ENCODE measurements at regions of chr9 and their contacts with region 1.

Region 1: GRCh38 chr9:129139993-129140396 is 28.8 kb downstream of the PTPA start:
- DNase-seq: peak; percentile 92 to 98 (median 96)
- ATAC-seq: peak; percentile 76 to 81 (median 78)
- H3K4me3 ChIP-seq: peak overlapping the region in 11 of 12 donors; percentile 29 to 69 (median 57)
- H3K27ac ChIP-seq: peak overlapping the region; percentile 99 to 100 (median 100)
- H3K4me1 ChIP-seq: peaks cover 25 to 77% (median 71%) of the 10 kb centered on the region in 12 donors
- H3K27me3 ChIP-seq: no peaks in the 10 kb centered on the region
- CTCF ChIP-seq: no peak
- POLR2A ChIP-seq: peak in 1 of 2 donors; percentile 50

Region 2: DNA sequence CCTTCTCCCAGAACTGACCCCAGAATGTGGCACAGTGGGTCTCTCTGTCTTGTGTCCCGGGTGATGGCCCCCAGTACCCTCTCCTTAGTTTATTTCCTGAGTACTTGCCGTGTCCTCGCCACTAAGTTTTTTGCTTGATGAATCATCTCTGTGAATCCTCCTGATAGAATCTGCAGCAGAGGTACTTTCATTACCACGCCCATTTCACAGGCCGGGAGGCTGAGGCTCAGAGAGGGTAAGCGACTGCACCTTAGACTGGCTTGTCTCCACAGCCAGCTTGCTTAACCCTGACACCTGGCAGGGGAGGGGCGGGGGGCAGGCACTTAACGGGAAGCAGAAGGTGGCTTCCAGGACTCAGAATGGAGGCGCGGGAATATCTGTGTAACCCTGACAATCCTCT is 46.0 kb after region 1 on chr9:
- intact Hi-C with region 1: no loop called
- DNase-seq: no peak
- ATAC-seq: no peak
- H3K4me3 ChIP-seq: no peak overlapping the region
- H3K27ac ChIP-seq: no peak overlapping the region
- H3K4me1 ChIP-seq: peaks cover 0 to 6% (median 0%) of the 10 kb centered on the region in 12 donors
- H3K27me3 ChIP-seq: no peaks in the 10 kb centered on the region
- CTCF ChIP-seq: no peak
- POLR2A ChIP-seq: no peak

Region 3: DNA sequence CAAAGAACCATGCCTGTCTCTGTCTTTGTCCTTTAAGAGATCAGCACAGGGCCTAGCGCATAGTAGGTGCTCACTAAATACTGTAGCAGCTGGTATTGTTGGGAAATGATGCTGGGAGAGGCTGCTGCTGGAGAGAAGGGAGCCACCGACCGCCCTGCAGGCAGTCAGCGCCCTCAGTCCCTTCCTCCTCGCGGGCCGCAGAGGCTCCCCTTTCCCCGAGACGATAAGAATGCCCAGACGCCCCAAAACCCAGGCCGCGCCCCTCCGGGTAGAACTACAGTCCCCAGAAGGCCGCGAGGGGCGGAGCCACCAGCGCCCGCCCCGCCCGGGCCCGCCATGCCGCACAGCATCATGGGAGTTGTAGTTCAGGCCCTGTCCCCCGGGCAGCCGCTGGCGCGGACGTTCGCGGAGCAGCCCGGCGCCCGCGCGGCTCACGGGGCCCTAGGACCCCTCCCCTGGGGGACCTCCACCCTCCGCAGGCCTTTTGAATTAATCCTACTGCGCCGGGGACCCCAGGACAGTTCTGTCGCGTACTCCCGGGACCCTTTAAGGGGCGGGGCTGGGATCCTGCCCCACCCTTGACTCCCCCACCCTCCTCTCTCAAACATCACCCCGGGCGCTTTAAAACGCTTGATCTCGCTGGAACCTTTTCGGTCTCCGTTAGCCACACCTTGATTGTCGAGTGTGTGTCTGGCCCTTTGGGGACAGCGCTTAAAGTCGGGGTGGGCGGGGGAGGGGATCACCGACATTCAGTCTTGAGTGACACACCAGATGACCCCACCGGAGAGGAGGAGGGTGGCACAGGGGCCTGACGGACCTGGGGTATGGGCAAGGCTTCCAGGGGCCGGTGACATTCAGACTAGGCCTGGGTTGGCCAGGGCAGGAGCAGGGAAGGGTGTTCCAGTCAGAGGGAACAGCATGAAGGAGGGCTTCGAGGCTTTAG is 62.9 kb after region 1 on chr9:
- intact Hi-C with region 1: loop called in 1 of 10 experiments (anchors 2 kb)
- DNase-seq: peak; percentile 89 to 95 (median 91)
- ATAC-seq: peak; percentile 75 to 95 (median 90)
- H3K4me3 ChIP-seq: peak overlapping the region; percentile 54 to 95 (median 78)
- H3K27ac ChIP-seq: peak overlapping the region; percentile 89 to 100 (median 97)
- H3K4me1 ChIP-seq: peaks cover 0 to 22% (median 8%) of the 10 kb centered on the region in 12 donors
- H3K27me3 ChIP-seq: no peaks in the 10 kb centered on the region
- CTCF ChIP-seq: no peak
- POLR2A ChIP-seq: peak in 1 of 2 donors; percentile 58

Region 4: DNA sequence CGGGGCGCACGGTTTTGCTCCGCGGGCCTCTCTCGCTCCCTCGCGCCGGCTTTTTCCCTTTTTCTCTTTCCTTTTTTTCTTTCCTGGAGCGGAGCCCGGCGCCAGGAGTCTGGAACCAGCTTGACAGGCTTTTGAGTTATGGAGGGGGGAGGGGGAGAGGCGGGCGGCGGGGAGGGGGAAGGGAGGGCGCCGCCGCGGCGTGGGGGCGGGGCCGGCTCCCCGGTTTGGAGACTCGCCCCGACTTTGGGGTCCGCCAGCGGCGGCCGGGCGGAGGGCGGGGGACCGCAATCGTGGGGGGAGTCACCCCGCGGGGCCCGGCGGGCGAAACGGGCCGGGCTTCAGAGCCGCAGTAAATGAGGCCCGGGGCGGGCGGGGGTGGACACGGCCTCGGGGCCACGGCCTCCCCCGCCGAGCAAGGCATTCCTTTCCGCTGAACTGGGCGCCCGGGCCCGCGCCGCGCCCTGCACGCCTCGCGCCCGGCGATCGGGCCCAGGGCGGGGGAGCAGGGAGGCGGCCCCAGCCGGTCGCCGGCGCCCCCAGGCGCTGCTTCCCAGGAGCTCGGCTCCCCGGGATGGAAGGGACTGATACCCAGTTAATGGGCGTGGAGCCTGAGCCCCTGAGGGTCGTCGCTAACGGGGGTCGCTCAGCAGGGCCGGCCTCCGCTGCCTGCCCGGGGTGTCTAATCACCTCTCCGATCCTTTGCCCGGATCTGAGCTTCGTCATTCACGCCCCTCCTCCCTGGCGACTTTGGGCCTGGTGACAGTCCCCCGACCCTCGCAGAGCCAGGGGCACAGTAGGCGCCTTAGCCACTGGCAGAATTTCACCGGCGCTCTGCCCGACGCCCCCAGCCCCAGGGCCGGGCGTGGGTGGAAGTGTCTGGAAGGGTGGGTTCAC is 342.8 kb after region 1 on chr9:
- intact Hi-C with region 1: loop called in 5 of 10 experiments (anchors 2 to 5 kb)
- DNase-seq: peak; percentile 88 to 93 (median 88)
- ATAC-seq: peak in 3 of 4 donors; percentile 43 to 74 (median 74)
- H3K4me3 ChIP-seq: peak overlapping the region; percentile 41 to 77 (median 66)
- H3K27ac ChIP-seq: peak overlapping the region; percentile 97 to 100 (median 99)
- H3K4me1 ChIP-seq: peaks cover 11 to 84% (median 64%) of the 10 kb centered on the region in 12 donors
- H3K27me3 ChIP-seq: no peaks in the 10 kb centered on the region
- CTCF ChIP-seq: peak in 4 of 12 donors; percentile 11 to 33 (median 20)
- POLR2A ChIP-seq: peak in 1 of 2 donors; percentile 32

Region 5: DNA sequence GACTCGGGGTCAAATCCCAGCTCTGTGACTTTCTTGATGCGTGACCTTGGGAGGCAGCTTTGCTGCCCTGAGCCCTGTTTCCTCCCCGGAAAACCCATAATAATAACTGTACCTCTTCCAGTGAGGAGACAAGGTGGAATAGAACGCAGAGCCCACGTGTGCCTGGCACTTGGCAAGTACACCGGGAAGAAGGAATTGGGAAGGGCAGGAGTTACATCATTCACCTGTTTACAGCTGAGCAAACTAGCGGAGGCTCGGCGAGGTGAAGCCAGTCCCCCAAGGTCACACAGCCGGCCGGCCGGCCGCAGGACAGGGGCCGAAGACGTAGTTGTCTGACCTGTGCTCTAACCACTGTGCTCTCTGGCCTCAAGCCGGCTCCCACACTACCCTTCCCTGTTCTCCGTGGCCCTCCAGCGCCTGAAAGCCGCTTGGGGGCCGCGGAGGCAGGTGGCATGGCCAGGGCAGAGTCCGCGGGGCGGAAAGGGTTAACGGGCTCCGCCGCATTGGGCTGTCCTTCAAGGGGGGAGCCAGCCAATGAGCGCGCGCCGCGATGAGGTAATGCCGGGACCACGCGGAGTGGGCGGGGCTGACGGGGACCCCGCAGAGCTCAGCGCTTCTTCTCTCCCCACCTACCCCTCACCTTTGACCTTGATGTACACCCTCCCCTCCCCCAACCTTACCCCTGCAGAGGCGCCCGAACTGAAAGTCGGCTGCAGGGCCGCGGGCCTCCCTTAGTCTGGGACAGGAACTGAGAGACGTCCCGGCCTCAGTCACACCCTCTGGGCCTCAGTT is 355.7 kb after region 1 on chr9:
- intact Hi-C with region 1: loop called in 3 of 10 experiments (anchors 2 to 5 kb)
- DNase-seq: peak; percentile 96 to 98 (median 97)
- ATAC-seq: peak; percentile 84 to 89 (median 86)
- H3K4me3 ChIP-seq: peak overlapping the region; percentile 30 to 72 (median 62)
- H3K27ac ChIP-seq: peak overlapping the region; percentile 93 to 100 (median 98)
- H3K4me1 ChIP-seq: peaks cover 8 to 92% (median 65%) of the 10 kb centered on the region in 12 donors
- H3K27me3 ChIP-seq: no peaks in the 10 kb centered on the region
- CTCF ChIP-seq: no peak
- POLR2A ChIP-seq: peak in 1 of 2 donors; percentile 14

Region 6: GRCh38 chr9:129776938-129777768 is 637.2 kb after region 1 on chr9:
- intact Hi-C with region 1: loop called in 4 of 10 experiments (anchors 5 kb)
- DNase-seq: peak; percentile 91 to 97 (median 95)
- ATAC-seq: peak; percentile 87 to 99 (median 97)
- H3K4me3 ChIP-seq: peak overlapping the region in 7 of 12 donors; percentile 0 to 32 (median 15)
- H3K27ac ChIP-seq: peak overlapping the region in 11 of 12 donors; percentile 12 to 78 (median 62)
- H3K4me1 ChIP-seq: peaks cover 0 to 34% (median 14%) of the 10 kb centered on the region in 12 donors
- H3K27me3 ChIP-seq: no peaks in the 10 kb centered on the region
- CTCF ChIP-seq: no peak
- POLR2A ChIP-seq: no peak

Region 7: GRCh38 chr9:129796029-129796910 is 656.3 kb after region 1 on chr9:
- intact Hi-C with region 1: loop called in 1 of 10 experiments (anchors 10 kb)
- DNase-seq: no peak
- ATAC-seq: no peak
- H3K4me3 ChIP-seq: no peak overlapping the region
- H3K27ac ChIP-seq: no peak overlapping the region
- H3K4me1 ChIP-seq: no peaks in the 10 kb centered on the region
- H3K27me3 ChIP-seq: peaks cover 0 to 10% (median 0%) of the 10 kb centered on the region in 9 donors
- CTCF ChIP-seq: no peak
- POLR2A ChIP-seq: no peak

Region 8: GRCh38 chr9:131094622-131095021 is 1954.6 kb after region 1 on chr9:
- intact Hi-C with region 1: no loop called
- DNase-seq: peak in 3 of 5 donors; percentile 67 to 84 (median 77)
- ATAC-seq: peak; percentile 11 to 73 (median 60)
- H3K4me3 ChIP-seq: no peak overlapping the region
- H3K27ac ChIP-seq: peak overlapping the region in 1 of 12 donors; percentile 88
- H3K4me1 ChIP-seq: peaks cover 0 to 36% (median 22%) of the 10 kb centered on the region in 12 donors
- H3K27me3 ChIP-seq: peaks cover 0 to 42% (median 10%) of the 10 kb centered on the region in 9 donors
- CTCF ChIP-seq: no peak
- POLR2A ChIP-seq: peak in 1 of 2 donors; percentile 12